Activated B cell treated with CpG ODN at 0.5 μM for 24 hours (primary cell): ENCODE measurements at regions of chr11 and their contacts with region 1.

Region 1: GRCh38 chr11:124746621-124747243 is 5.3 kb downstream of the VSIG2 start:
- DNase-seq: peak; percentile 73
- ATAC-seq: peak; percentile 89
- H3K4me3 Mint-ChIP-seq: peak overlapping the region; percentile 97
- H3K27ac Mint-ChIP-seq: peak overlapping the region; percentile 93
- H3K4me1 Mint-ChIP-seq: peaks cover 37% of the 10 kb centered on the region
- H3K27me3 Mint-ChIP-seq: peaks cover 2% of the 10 kb centered on the region
- CTCF ChIP-seq: no peak

Region 2: GRCh38 chr11:124800226-124800929 is 53.6 kb after region 1 on chr11 and contains the start of gene MSANTD2:
- CTCF ChIA-PET with region 1: no interaction called
- POLR2A ChIA-PET with region 1: interaction called, 7 read pairs
- intact Hi-C with region 1: loop called (anchors 1 kb)
- DNase-seq: peak; percentile 85
- ATAC-seq: peak; percentile 84
- H3K4me3 Mint-ChIP-seq: peak within 1 kb of the TSS; percentile 92
- H3K27ac Mint-ChIP-seq: peak within 1 kb of the TSS; percentile 92
- H3K4me1 Mint-ChIP-seq: peaks cover 26% of the 10 kb centered on the region
- H3K27me3 Mint-ChIP-seq: no peaks in the 10 kb centered on the region
- CTCF ChIP-seq: no peak
- total RNA-seq, gene MSANTD2: 17.7 and 21.0 TPM in 2 replicates

Region 3: DNA sequence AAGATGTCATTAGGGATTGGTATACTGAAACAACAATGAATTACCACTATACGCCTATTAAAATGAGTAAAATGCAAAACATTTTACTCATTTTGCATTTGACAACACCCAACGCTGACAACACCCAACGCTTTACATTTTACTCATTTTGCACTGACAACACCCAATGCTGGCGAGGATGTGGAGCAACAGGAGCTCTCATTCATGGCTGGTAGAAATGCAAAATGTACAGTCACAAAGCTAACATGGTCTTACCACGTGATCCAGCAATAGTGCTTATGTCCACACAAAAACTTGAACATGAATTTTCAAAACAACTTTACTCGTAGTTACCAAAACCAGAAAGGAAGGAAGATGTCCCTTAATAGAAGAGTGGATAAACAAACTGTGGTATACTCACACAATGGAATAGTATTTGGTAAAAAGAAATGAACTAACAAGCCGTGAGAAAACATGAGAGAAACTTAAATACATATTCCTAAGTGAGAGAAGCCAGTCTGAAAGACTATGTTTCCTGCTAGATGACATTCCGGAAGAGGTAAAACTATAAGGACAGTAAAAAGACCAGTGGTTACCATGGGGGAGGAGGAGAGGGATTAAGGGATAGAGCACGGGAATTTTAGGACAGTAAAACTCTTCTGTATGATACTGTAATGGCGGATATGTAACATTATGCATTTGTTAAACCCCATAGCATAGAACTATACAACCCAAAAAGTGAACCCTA is 64.8 kb after region 1 on chr11:
- CTCF ChIA-PET with region 1: no interaction called
- POLR2A ChIA-PET with region 1: no interaction called
- intact Hi-C with region 1: no loop called
- DNase-seq: no peak
- ATAC-seq: no peak
- H3K4me3 Mint-ChIP-seq: no peak overlapping the region
- H3K27ac Mint-ChIP-seq: no peak overlapping the region
- H3K4me1 Mint-ChIP-seq: no peaks in the 10 kb centered on the region
- H3K27me3 Mint-ChIP-seq: peaks cover 8% of the 10 kb centered on the region
- CTCF ChIP-seq: no peak